Heart left ventricle (tissue), 16 donors: ENCODE measurements at regions of chr5 and their contacts with region 1.

Region 1: GRCh38 chr5:120463991-120464626 is at the start of gene PRR16:
- DNase-seq: peak; percentile 57 to 80 (median 66)
- ATAC-seq: peak; percentile 62 to 92 (median 88)
- H3K4me3 ChIP-seq: peak within 1 kb of the TSS; percentile 57 to 89 (median 74)
- H3K27ac ChIP-seq: peak within 1 kb of the TSS; percentile 54 to 89 (median 78)
- H3K4me1 ChIP-seq: peaks cover 0 to 33% (median 11%) of the 10 kb centered on the region in 12 donors
- H3K27me3 ChIP-seq: peaks cover 0 to 5% (median 0%) of the 10 kb centered on the region in 9 donors
- CTCF ChIP-seq: peak in 7 of 12 donors; percentile 17 to 53 (median 36)
- POLR2A ChIP-seq: peak in 1 of 2 donors; percentile 41
- total RNA-seq, gene PRR16: 4.7 to 18.8 (median 9.0) TPM

Region 2: DNA sequence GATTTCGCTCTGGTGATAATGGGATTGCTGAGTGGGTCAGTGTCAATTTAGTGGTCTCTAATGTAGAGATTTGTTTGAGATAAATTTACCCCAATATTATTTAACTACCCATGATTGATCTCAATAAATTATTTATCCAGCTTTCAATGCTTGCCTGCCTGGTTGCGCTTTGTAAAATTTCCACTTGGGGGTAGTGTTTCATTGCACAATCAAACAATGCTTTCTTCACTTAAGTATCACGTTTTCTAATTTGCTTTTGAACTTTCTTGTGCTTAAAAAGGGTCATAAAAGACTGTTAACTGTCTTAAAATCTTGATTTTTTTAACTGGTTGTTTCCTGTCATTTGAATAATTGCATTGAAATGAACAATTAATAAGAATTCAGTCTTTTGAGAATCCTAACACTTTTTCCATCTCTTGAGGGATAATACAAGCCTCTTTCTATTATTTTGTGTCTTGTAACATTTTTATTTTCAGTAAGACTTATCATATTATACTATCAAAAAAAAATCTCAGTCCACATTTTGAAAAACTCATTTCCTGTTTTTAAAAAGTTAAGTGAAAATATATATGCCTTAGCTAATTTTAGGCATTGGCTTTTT is 993.2 kb before region 1 on chr5:
- intact Hi-C with region 1: loop called in 1 of 10 experiments (anchors 10 kb)
- DNase-seq: no peak
- ATAC-seq: no peak
- H3K4me3 ChIP-seq: no peak overlapping the region
- H3K27ac ChIP-seq: no peak overlapping the region
- H3K4me1 ChIP-seq: peaks cover 0 to 13% (median 0%) of the 10 kb centered on the region in 12 donors
- H3K27me3 ChIP-seq: no peaks in the 10 kb centered on the region
- CTCF ChIP-seq: peak; percentile 21 to 66 (median 46)
- POLR2A ChIP-seq: no peak

Region 3: GRCh38 chr5:119943148-119943547 is 521.0 kb before region 1 on chr5:
- intact Hi-C with region 1: loop called in 9 of 10 experiments (anchors 2 to 10 kb)
- DNase-seq: no peak
- ATAC-seq: peak in 2 of 4 donors; percentile 34 to 68
- H3K4me3 ChIP-seq: no peak overlapping the region
- H3K27ac ChIP-seq: no peak overlapping the region
- H3K4me1 ChIP-seq: no peaks in the 10 kb centered on the region
- H3K27me3 ChIP-seq: no peaks in the 10 kb centered on the region
- CTCF ChIP-seq: peak in 10 of 12 donors; percentile 20 to 55 (median 36)
- POLR2A ChIP-seq: no peak

Region 4: GRCh38 chr5:120055858-120056257 is 408.3 kb before region 1 on chr5:
- intact Hi-C with region 1: loop called in 9 of 10 experiments (anchors 5 to 10 kb)
- DNase-seq: no peak
- ATAC-seq: peak; percentile 37 to 82 (median 67)
- H3K4me3 ChIP-seq: no peak overlapping the region
- H3K27ac ChIP-seq: peak overlapping the region in 7 of 12 donors; percentile 1 to 75 (median 40)
- H3K4me1 ChIP-seq: peaks cover 0 to 36% (median 9%) of the 10 kb centered on the region in 12 donors
- H3K27me3 ChIP-seq: no peaks in the 10 kb centered on the region
- CTCF ChIP-seq: peak in 8 of 12 donors; percentile 7 to 51 (median 38)
- POLR2A ChIP-seq: no peak

Region 5: DNA sequence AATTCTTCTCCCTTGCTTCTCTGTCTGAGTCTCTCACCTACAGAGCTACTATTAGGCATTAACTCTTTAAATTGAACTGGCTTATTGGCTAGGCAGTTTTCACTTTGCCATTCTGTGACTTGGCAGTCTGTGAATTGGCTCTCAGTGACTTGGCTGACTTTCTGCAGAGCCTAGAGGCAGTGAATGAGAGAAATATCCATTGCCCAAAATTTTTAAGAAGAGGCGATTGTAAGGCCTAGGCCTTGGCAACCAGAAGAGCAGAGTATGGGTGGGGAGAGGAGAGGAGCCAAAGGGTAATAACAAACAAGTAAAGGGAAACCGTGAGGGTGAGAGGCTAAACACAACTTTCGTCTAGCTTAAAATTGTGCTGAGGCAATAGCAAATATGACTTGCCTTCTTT is 176.7 kb after region 1 on chr5:
- intact Hi-C with region 1: no loop called
- DNase-seq: no peak
- ATAC-seq: no peak
- H3K4me3 ChIP-seq: no peak overlapping the region
- H3K27ac ChIP-seq: no peak overlapping the region
- H3K4me1 ChIP-seq: no peaks in the 10 kb centered on the region
- H3K27me3 ChIP-seq: no peaks in the 10 kb centered on the region
- CTCF ChIP-seq: no peak
- POLR2A ChIP-seq: no peak

Region 6: DNA sequence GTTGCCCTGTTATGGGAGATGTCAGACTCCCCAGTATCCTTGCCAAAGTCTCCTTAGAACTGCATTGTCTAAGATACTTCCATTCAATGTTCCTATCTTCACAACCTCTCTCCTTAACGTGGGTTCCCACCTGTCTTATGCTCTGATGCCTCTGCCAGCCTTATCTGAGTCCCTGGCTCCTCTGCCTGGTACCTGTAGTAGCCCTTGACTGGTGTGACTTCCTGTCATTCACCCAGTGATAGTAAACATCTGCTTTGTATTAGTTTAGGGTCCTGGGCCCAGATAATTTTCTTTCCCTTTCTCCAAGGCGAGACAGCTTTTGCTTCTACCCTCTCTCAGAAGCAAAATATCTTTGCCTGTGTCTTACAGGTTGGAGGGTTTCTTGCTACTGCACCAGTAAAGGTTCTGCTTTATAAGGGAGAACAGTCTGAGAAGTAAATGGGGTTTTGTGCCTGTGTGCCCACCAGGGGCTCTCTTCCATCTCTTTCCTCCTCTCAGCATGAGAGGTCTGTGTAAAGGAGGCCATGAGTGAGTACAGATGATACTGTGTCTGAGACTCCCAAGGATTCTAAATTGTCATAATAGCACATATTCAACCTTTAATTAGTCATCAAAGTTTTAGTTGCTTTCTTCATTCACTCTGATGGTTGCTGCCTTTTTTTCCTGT is 220.8 kb after region 1 on chr5:
- intact Hi-C with region 1: loop called in 1 of 10 experiments (anchors 10 kb)
- DNase-seq: no peak
- ATAC-seq: no peak
- H3K4me3 ChIP-seq: no peak overlapping the region
- H3K27ac ChIP-seq: no peak overlapping the region
- H3K4me1 ChIP-seq: no peaks in the 10 kb centered on the region
- H3K27me3 ChIP-seq: no peaks in the 10 kb centered on the region
- CTCF ChIP-seq: peak in 3 of 12 donors; percentile 7 to 18 (median 16)
- POLR2A ChIP-seq: no peak

Region 7: DNA sequence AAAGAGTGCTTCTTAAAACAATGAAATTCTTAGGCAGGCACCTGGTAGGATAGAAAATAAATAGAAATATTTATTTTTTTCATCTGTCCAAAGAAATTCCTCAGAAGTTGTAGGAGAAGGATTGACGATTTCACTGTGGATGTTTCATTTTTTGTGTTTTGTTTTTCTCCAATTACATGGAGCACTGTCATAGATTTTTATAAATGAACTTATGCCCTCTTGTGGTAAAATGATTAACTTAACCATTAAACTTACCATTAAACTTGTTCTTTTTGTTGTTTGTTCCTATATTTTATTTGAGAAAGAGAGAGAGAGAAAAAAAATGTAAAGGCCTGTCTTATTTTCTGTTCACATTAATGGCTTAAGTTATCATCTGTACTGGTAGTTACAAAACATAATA is 339.2 kb after region 1 on chr5:
- intact Hi-C with region 1: loop called in 5 of 10 experiments (anchors 5 to 10 kb)
- DNase-seq: no peak
- ATAC-seq: no peak
- H3K4me3 ChIP-seq: no peak overlapping the region
- H3K27ac ChIP-seq: no peak overlapping the region
- H3K4me1 ChIP-seq: peaks cover 0 to 6% (median 0%) of the 10 kb centered on the region in 12 donors
- H3K27me3 ChIP-seq: no peaks in the 10 kb centered on the region
- CTCF ChIP-seq: peak in 9 of 12 donors; percentile 8 to 51 (median 40)
- POLR2A ChIP-seq: no peak